CD8-positive, alpha-beta T cell (primary cell): ENCODE measurements at regions of chr1 and their contacts with region 1.

Region 1: DNA sequence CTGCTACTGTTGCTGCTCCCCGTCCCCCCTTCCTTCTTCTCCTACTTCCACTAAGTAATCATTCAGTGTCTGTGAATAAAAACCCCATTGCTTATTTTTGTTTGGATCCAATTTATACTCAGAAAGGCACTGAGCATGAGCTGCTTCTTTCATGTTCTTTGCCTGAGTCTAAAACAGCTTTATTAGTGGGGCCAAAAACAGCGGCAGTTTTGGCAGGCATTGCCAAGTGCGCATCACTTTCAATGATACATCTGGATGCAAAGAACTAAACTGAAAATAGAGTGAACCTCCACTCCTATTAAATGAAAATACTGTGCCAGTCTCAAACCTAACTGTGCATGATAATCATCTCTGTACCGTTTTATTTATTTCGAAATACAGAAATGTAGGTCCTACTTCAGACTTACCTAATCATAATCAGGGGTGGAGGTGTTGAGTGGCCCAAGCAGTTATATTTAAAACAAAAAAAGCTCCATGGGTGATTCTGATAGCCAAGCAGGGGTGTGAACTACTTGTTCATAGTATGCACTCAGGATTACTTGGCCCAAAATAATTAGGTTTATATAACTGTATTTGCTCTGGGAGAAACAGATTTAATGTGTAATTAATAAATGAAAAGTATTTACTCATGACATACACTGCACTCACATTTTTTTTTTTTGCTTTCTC is 48.4 kb downstream of the NEK7 start:
- DNase-seq: no peak
- ATAC-seq: no peak
- H3K4me3 ChIP-seq: no peak overlapping the region
- H3K4me3 Mint-ChIP-seq: no peak overlapping the region
- H3K27ac ChIP-seq: no peak overlapping the region
- H3K27ac Mint-ChIP-seq: no peak overlapping the region
- H3K4me1 ChIP-seq: peaks cover 11% of the 10 kb centered on the region
- H3K4me1 Mint-ChIP-seq: peaks cover 67% of the 10 kb centered on the region
- H3K27me3 ChIP-seq: no peaks in the 10 kb centered on the region
- H3K27me3 Mint-ChIP-seq: no peaks in the 10 kb centered on the region
- CTCF ChIP-seq: no peak

Region 2: GRCh38 chr1:197356723-197357533 is 848.2 kb before region 1 on chr1:
- CTCF ChIA-PET with region 1: no interaction called
- POLR2A ChIA-PET with region 1: no interaction called
- intact Hi-C with region 1: no loop called
- DNase-seq: peak in 2 of 9 experiments; percentile 49 to 58
- ATAC-seq: peak; percentile 51
- H3K4me3 ChIP-seq: no peak overlapping the region
- H3K4me3 Mint-ChIP-seq: no peak overlapping the region
- H3K27ac ChIP-seq: no peak overlapping the region
- H3K27ac Mint-ChIP-seq: no peak overlapping the region
- H3K4me1 ChIP-seq: no peaks in the 10 kb centered on the region
- H3K4me1 Mint-ChIP-seq: peaks cover 2% of the 10 kb centered on the region
- H3K27me3 ChIP-seq: no peaks in the 10 kb centered on the region
- H3K27me3 Mint-ChIP-seq: no peaks in the 10 kb centered on the region
- CTCF ChIP-seq: no peak

Region 3: DNA sequence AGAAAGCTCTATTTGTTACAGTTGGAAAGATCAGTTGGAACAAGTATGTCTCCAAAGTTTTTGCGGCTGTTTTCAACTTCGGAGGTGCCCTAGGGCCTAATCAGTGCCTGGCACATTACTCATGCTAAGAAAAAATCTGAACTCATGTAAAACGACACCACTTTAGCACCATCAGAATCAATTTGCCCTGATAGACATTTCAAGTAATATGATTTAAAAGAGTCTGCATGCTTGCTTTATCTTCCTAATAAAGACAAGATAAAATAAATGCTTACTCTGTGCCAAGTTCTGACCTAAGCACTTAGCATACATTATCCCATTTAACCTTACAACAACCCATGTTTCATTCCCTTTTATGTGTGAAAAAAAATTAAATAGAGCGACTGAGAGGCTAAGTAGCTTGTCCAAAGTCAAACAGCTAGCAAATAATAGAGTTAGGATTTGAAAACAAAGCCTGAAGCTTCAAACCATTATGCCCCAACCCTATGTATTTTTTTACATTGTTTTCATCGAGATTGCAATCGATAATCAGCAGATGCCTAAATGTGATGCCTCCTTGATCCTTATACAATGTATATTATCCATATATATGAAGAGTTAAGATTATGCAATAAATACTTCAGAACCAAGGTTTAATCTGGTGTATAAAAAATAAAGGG is 521.1 kb before region 1 on chr1:
- CTCF ChIA-PET with region 1: no interaction called
- POLR2A ChIA-PET with region 1: no interaction called
- intact Hi-C with region 1: no loop called
- DNase-seq: no peak
- ATAC-seq: no peak
- H3K4me3 ChIP-seq: no peak overlapping the region
- H3K4me3 Mint-ChIP-seq: no peak overlapping the region
- H3K27ac ChIP-seq: no peak overlapping the region
- H3K27ac Mint-ChIP-seq: no peak overlapping the region
- H3K4me1 ChIP-seq: no peaks in the 10 kb centered on the region
- H3K4me1 Mint-ChIP-seq: peaks cover 26% of the 10 kb centered on the region
- H3K27me3 ChIP-seq: no peaks in the 10 kb centered on the region
- H3K27me3 Mint-ChIP-seq: no peaks in the 10 kb centered on the region
- CTCF ChIP-seq: no peak

Region 4: DNA sequence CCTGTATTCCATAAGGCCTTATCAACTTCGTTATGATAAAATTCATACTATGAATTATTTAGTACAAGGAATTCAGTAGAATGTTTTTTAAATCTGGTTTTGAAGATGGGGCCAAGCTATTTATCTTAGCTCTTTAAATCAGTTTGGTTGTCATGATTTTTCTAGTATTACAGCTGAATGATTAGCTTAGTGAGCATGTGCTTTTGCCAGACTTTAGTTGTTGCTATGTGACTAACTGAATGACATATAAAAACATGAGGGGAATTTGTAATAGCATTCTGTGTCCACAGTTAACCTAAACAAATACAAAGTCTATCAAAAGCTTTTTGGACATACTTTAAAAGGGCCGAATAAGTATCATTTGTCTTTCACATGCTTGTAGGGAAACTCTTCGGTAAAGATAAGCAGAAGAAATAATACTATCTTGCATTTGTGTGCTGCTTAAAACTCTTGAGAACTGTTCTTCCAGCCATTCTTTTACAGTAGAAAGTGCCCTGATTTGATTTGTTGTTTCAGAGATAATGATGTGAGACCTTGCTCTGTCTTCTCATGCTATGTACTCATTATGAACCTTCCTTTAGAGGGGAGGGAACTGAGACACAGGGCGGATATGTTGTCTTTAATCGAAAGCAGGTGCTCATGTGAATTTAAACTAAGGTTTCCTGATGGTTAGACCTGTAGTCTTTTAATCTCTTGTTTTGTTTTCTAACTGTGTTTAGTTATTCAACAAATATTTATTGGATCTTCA is 29.6 kb before region 1 on chr1:
- CTCF ChIA-PET with region 1: no interaction called
- POLR2A ChIA-PET with region 1: no interaction called
- intact Hi-C with region 1: loop called in 1 of 2 experiments (anchors 5 kb)
- DNase-seq: peak in 2 of 9 experiments; percentile 47 to 67
- ATAC-seq: peak; percentile 79
- H3K4me3 ChIP-seq: peak overlapping the region in 1 of 2 experiments; percentile 15
- H3K4me3 Mint-ChIP-seq: peak overlapping the region; percentile 55
- H3K27ac ChIP-seq: peak overlapping the region; percentile 36 to 60
- H3K27ac Mint-ChIP-seq: peak overlapping the region; percentile 88
- H3K4me1 ChIP-seq: peaks cover 84% of the 10 kb centered on the region
- H3K4me1 Mint-ChIP-seq: peaks cover 89% of the 10 kb centered on the region
- H3K27me3 ChIP-seq: no peaks in the 10 kb centered on the region
- H3K27me3 Mint-ChIP-seq: no peaks in the 10 kb centered on the region
- CTCF ChIP-seq: no peak

Region 5: DNA sequence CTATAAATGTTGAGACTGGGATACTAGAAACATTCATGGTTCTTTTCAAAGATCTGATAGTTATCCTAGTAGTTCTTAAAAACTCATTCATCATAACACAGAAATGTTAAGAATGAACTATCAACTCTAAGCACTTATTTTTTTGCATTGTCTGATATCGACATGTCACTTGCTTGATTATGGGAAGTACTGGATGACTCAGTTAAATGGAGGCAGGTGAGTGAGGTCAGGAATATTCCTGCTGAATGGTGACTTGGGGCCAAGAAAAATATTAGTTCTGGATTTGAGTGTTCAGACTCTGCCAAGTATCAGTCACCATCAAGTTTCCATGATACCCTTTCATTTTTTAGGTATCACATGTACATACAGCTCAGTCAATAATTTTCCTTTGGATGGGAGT is 15.3 kb after region 1 on chr1:
- CTCF ChIA-PET with region 1: no interaction called
- POLR2A ChIA-PET with region 1: interaction called, 4 read pairs
- intact Hi-C with region 1: loop called (anchors 2 kb)
- DNase-seq: no peak
- ATAC-seq: no peak
- H3K4me3 ChIP-seq: no peak overlapping the region
- H3K4me3 Mint-ChIP-seq: no peak overlapping the region
- H3K27ac ChIP-seq: no peak overlapping the region
- H3K27ac Mint-ChIP-seq: peak overlapping the region; percentile 62
- H3K4me1 ChIP-seq: no peaks in the 10 kb centered on the region
- H3K4me1 Mint-ChIP-seq: peaks cover 55% of the 10 kb centered on the region
- H3K27me3 ChIP-seq: no peaks in the 10 kb centered on the region
- H3K27me3 Mint-ChIP-seq: no peaks in the 10 kb centered on the region
- CTCF ChIP-seq: no peak

Region 6: GRCh38 chr1:198241553-198241952 is 36.4 kb after region 1 on chr1:
- CTCF ChIA-PET with region 1: no interaction called
- POLR2A ChIA-PET with region 1: no interaction called
- intact Hi-C with region 1: loop called in 1 of 2 experiments (anchors 5 kb)
- DNase-seq: no peak
- ATAC-seq: no peak
- H3K4me3 ChIP-seq: no peak overlapping the region
- H3K4me3 Mint-ChIP-seq: no peak overlapping the region
- H3K27ac ChIP-seq: no peak overlapping the region
- H3K27ac Mint-ChIP-seq: no peak overlapping the region
- H3K4me1 ChIP-seq: no peaks in the 10 kb centered on the region
- H3K4me1 Mint-ChIP-seq: peaks cover 46% of the 10 kb centered on the region
- H3K27me3 ChIP-seq: no peaks in the 10 kb centered on the region
- H3K27me3 Mint-ChIP-seq: no peaks in the 10 kb centered on the region
- CTCF ChIP-seq: no peak